T-cell (primary cell): ENCODE measurements at regions of chr12 and their contacts with region 1.

Region 1: GRCh38 chr12:57520053-57520871 is at the start of gene DDIT3:
- DNase-seq: peak; percentile 98 to 100 (median 99)
- ATAC-seq: peak; percentile 77 to 82 (median 78)
- H3K4me3 ChIP-seq: peak within 1 kb of the TSS; percentile 95 to 98
- H3K4me3 Mint-ChIP-seq: peak within 1 kb of the TSS; percentile 94 to 98 (median 94)
- H3K27ac ChIP-seq: peak within 1 kb of the TSS; percentile 100
- H3K27ac Mint-ChIP-seq: peak within 1 kb of the TSS; percentile 99 to 100
- H3K4me1 ChIP-seq: peaks cover 25 to 59% of the 10 kb centered on the region in 2 experiments
- H3K4me1 Mint-ChIP-seq: peaks cover 57 to 64% (median 60%) of the 10 kb centered on the region in 3 donors
- H3K27me3 ChIP-seq: no peaks in the 10 kb centered on the region
- H3K27me3 Mint-ChIP-seq: no peaks in the 10 kb centered on the region
- total RNA-seq, gene DDIT3: 34.5 to 93.5 (median 40.7) TPM

Region 2: GRCh38 chr12:57389033-57389432 is 131.2 kb before region 1 on chr12:
- CTCF ChIA-PET with region 1: no interaction called
- POLR2A ChIA-PET with region 1: no interaction called
- DNase-seq: no peak
- ATAC-seq: no peak
- H3K4me3 ChIP-seq: no peak overlapping the region
- H3K4me3 Mint-ChIP-seq: no peak overlapping the region
- H3K27ac ChIP-seq: no peak overlapping the region
- H3K27ac Mint-ChIP-seq: no peak overlapping the region
- H3K4me1 ChIP-seq: no peaks in the 10 kb centered on the region
- H3K4me1 Mint-ChIP-seq: peaks cover 8 to 15% (median 8%) of the 10 kb centered on the region in 3 donors
- H3K27me3 ChIP-seq: no peaks in the 10 kb centered on the region
- H3K27me3 Mint-ChIP-seq: no peaks in the 10 kb centered on the region

Region 3: DNA sequence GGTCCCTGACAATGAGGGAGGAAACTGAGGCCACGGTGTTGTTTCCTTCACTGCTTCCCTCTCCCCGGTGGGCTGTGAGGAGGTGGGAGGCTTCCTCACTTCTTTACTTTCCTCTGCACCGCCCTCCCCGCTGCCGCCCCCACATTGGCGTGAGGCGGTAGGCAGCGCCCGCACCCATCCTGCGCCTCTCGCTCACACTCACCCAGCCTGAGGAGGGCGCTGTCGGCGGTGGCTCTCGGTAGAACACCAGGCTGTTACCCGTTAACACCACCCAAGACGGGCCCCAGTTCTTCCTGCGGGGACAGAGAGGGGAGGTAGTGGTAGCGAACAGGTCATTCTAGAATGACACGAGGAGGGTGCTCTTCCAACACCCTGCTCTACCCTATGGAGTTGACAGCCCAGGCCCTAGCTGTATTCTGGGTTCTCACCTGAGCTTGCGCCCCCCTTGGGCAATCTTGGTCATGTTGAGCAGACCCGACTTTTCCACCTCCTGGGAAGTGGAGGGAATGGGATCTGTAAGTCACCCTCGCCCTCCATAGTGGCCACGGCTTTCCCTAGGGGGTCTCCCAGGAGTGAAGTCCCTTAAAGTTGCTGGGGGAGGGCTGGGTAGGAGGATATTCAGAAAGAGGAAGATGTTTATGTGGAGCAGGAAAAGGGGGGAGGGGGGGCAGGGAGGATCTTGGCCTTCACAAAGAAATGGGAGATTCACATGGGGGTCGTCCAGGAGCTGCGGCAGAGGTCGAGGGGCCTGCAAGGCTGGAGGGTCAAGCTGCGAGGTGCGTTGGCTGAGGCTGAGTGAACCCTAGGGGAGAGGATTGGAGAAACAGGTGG is 43.9 kb before region 1 on chr12:
- CTCF ChIA-PET with region 1: interaction called, 3 to 4 read pairs
- POLR2A ChIA-PET with region 1: interaction called, 6 to 10 read pairs
- DNase-seq: peak; percentile 55 to 80 (median 71)
- ATAC-seq: peak; percentile 21 to 41 (median 23)
- H3K4me3 ChIP-seq: peak overlapping the region; percentile 83 to 91
- H3K4me3 Mint-ChIP-seq: peak overlapping the region; percentile 98 to 99 (median 98)
- H3K27ac ChIP-seq: peak overlapping the region; percentile 98
- H3K27ac Mint-ChIP-seq: peak overlapping the region; percentile 98
- H3K4me1 ChIP-seq: peaks cover 28 to 93% of the 10 kb centered on the region in 2 experiments
- H3K4me1 Mint-ChIP-seq: peaks cover 71 to 92% (median 89%) of the 10 kb centered on the region in 3 donors
- H3K27me3 ChIP-seq: no peaks in the 10 kb centered on the region
- H3K27me3 Mint-ChIP-seq: no peaks in the 10 kb centered on the region